Activated CD8-positive, alpha-beta memory T cell treated with anti-CD3 and anti-CD28 coated beads, Interleukin-2, amount 10 ng/mL, durations not matched to agents 7 days and 5 days (primary cell): ENCODE measurements at regions of chr1 and their contacts with region 1.

Region 1: GRCh38 chr1:70354332-70355110 is at the start of gene ANKRD13C:
- DNase-seq: peak; percentile 96
- ATAC-seq: peak; percentile 93
- H3K4me3 Mint-ChIP-seq: peak within 1 kb of the TSS; percentile 97
- H3K27ac Mint-ChIP-seq: peak within 1 kb of the TSS; percentile 99
- H3K4me1 Mint-ChIP-seq: peaks cover 43% of the 10 kb centered on the region
- H3K27me3 Mint-ChIP-seq: no peaks in the 10 kb centered on the region
- total RNA-seq, gene ANKRD13C: 24.7 to 26.2 TPM

Region 2: DNA sequence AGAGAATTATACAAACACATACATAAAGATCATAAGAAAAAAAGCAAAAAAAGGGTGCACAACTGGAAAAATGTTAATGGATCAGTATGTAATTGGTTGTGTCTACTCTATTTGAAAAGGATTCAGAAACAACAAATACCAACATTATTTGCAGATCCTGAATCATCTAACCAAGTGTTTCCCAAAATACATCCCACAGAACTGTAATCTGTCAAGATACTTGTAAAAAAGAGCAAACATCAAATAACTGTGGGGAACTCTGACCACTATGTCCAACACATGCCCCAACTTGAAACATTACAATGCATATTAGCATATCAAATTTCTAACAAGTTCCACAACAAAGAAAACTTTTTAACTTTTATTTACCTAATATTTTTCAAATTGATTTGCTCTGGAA is 22.6 kb before region 1 on chr1:
- CTCF ChIA-PET with region 1: no interaction called
- DNase-seq: no peak
- ATAC-seq: no peak
- H3K4me3 Mint-ChIP-seq: no peak overlapping the region
- H3K27ac Mint-ChIP-seq: no peak overlapping the region
- H3K4me1 Mint-ChIP-seq: peaks cover 4% of the 10 kb centered on the region
- H3K27me3 Mint-ChIP-seq: no peaks in the 10 kb centered on the region

Region 3: GRCh38 chr1:70376196-70376595 is 21.7 kb after region 1 on chr1:
- CTCF ChIA-PET with region 1: no interaction called
- DNase-seq: no peak
- ATAC-seq: no peak
- H3K4me3 Mint-ChIP-seq: no peak overlapping the region
- H3K27ac Mint-ChIP-seq: no peak overlapping the region
- H3K4me1 Mint-ChIP-seq: no peaks in the 10 kb centered on the region
- H3K27me3 Mint-ChIP-seq: no peaks in the 10 kb centered on the region

Region 4: DNA sequence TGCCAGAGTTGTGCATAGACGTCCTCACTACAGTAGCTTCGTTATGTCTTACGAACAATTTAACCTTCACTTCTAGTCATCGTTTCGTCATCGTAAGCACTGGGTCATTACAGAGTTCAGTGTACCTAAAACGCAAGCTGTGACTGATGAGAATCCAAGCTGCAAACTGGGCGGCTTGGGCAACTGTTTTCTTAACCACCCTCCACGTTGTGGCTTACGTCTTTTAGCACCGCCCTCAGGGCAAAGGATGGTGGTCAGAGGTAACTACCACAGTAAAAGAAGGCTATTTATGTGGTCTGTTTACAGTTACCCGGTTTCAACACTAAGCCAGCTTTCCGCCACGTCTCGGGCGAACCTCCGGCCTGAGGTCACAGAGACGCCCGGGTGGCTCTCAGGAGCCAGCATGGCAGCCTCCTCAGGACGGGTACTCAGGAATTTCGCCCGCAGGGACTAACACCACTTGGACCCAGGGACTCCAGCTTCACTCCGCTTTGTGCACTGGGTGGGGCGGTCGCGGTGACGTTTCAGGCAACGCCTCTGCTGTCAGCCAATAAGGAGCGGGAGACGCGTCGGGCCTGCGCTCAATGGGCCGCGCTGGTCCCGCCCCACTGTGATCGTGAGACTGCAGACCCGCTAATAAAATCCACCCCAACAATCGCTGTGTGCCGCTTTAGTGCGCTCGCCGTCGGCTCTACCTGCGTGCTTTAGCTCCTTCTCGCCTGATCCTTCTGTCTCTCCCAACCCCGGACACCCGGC is 56.3 kb after region 1 on chr1 and contains the start of gene CTH:
- CTCF ChIA-PET with region 1: interaction called, 17 read pairs
- DNase-seq: peak; percentile 97
- ATAC-seq: peak; percentile 97
- H3K4me3 Mint-ChIP-seq: peak within 1 kb of the TSS; percentile 95
- H3K27ac Mint-ChIP-seq: peak within 1 kb of the TSS; percentile 95
- H3K4me1 Mint-ChIP-seq: peaks cover 20% of the 10 kb centered on the region
- H3K27me3 Mint-ChIP-seq: peaks cover 15% of the 10 kb centered on the region
- total RNA-seq, gene CTH: 9.1 to 13.1 TPM

Region 5: GRCh38 chr1:70528590-70529333 is 174.2 kb after region 1 on chr1:
- CTCF ChIA-PET with region 1: no interaction called
- DNase-seq: no peak
- ATAC-seq: peak; percentile 76
- H3K4me3 Mint-ChIP-seq: no peak overlapping the region
- H3K27ac Mint-ChIP-seq: no peak overlapping the region
- H3K4me1 Mint-ChIP-seq: peaks cover 4% of the 10 kb centered on the region
- H3K27me3 Mint-ChIP-seq: peaks cover 21% of the 10 kb centered on the region